MCF 10A (cell line): ENCODE measurements at regions of chr18 and their contacts with region 1.

Region 1: GRCh38 chr18:42053188-42053781 is 98.3 kb downstream of the PIK3C3 start:
- DNase-seq: peak; percentile 56
- H3K4me3 Mint-ChIP-seq: no peak overlapping the region
- H3K27ac Mint-ChIP-seq: peak overlapping the region; percentile 59
- H3K4me1 Mint-ChIP-seq: peaks cover 7% of the 10 kb centered on the region
- H3K27me3 Mint-ChIP-seq: no peaks in the 10 kb centered on the region
- CTCF ChIP-seq: peak; percentile 66

Region 2: GRCh38 chr18:42028247-42028832 is 24.9 kb before region 1 on chr18:
- CTCF ChIA-PET with region 1: interaction called, 13 read pairs
- POLR2A ChIA-PET with region 1: interaction called, 4 read pairs
- intact Hi-C with region 1: no loop called
- DNase-seq: peak; percentile 38
- H3K4me3 Mint-ChIP-seq: no peak overlapping the region
- H3K27ac Mint-ChIP-seq: no peak overlapping the region
- H3K4me1 Mint-ChIP-seq: no peaks in the 10 kb centered on the region
- H3K27me3 Mint-ChIP-seq: no peaks in the 10 kb centered on the region
- CTCF ChIP-seq: peak; percentile 38

Region 3: GRCh38 chr18:42064109-42064508 is 10.8 kb after region 1 on chr18:
- CTCF ChIA-PET with region 1: interaction called, 23 read pairs
- POLR2A ChIA-PET with region 1: interaction called, 3 read pairs
- intact Hi-C with region 1: no loop called
- DNase-seq: no peak
- H3K4me3 Mint-ChIP-seq: no peak overlapping the region
- H3K27ac Mint-ChIP-seq: peak overlapping the region; percentile 46
- H3K4me1 Mint-ChIP-seq: no peaks in the 10 kb centered on the region
- H3K27me3 Mint-ChIP-seq: no peaks in the 10 kb centered on the region
- CTCF ChIP-seq: no peak

Region 4: DNA sequence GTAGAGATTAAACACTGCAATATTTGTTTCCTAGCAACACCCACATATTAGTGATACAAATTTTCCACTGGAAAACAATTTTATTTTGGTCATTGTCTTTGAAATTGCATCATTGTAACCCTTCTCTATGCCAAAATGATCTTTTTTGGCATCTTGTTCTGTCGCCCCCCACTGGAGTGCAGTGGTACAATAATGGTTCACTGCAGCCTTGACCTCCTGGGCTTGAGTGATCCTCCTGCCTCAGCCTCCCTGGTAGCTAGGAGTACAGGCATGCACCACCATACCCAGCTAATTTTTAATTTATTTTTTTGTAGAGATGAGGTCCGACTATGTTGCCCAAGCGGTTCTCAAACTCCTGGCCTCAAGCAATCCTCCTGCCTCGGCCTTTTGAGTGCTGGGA is 19.1 kb after region 1 on chr18:
- CTCF ChIA-PET with region 1: interaction called, 23 read pairs
- POLR2A ChIA-PET with region 1: interaction called, 3 read pairs
- intact Hi-C with region 1: no loop called
- DNase-seq: no peak
- H3K4me3 Mint-ChIP-seq: no peak overlapping the region
- H3K27ac Mint-ChIP-seq: no peak overlapping the region
- H3K4me1 Mint-ChIP-seq: no peaks in the 10 kb centered on the region
- H3K27me3 Mint-ChIP-seq: no peaks in the 10 kb centered on the region
- CTCF ChIP-seq: no peak

Region 5: DNA sequence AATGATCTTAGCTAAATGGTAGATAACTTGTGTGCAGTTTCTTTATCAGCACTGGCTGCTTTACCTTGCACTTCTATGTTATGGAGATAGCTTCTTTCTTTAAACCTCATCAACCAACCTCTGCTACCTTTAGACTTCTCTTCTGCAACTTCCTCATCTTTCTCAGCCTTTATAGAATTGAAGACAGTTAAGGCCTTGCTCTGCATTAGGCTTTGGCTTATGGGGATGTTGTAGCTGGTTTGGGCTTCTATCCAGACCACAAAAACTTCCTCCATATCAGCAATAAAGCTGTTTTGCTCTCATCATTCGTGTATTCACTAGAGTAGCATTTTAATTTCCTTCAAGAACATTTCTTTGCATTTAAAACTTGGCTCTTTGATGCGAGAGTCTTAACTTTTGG is 25.4 kb after region 1 on chr18:
- CTCF ChIA-PET with region 1: interaction called, 16 read pairs
- POLR2A ChIA-PET with region 1: interaction called, 3 read pairs
- intact Hi-C with region 1: no loop called
- DNase-seq: no peak
- H3K4me3 Mint-ChIP-seq: no peak overlapping the region
- H3K27ac Mint-ChIP-seq: no peak overlapping the region
- H3K4me1 Mint-ChIP-seq: no peaks in the 10 kb centered on the region
- H3K27me3 Mint-ChIP-seq: no peaks in the 10 kb centered on the region
- CTCF ChIP-seq: no peak

Region 6: GRCh38 chr18:42222557-42222956 is 169.3 kb after region 1 on chr18:
- CTCF ChIA-PET with region 1: no interaction called
- POLR2A ChIA-PET with region 1: no interaction called
- intact Hi-C with region 1: no loop called
- DNase-seq: no peak
- H3K4me3 Mint-ChIP-seq: no peak overlapping the region
- H3K27ac Mint-ChIP-seq: no peak overlapping the region
- H3K4me1 Mint-ChIP-seq: no peaks in the 10 kb centered on the region
- H3K27me3 Mint-ChIP-seq: no peaks in the 10 kb centered on the region
- CTCF ChIP-seq: no peak

Region 7: GRCh38 chr18:42298759-42299675 is 245.7 kb after region 1 on chr18:
- CTCF ChIA-PET with region 1: interaction called, 4 read pairs
- POLR2A ChIA-PET with region 1: no interaction called
- intact Hi-C with region 1: loop called (anchors 5 kb)
- DNase-seq: peak; percentile 75
- H3K4me3 Mint-ChIP-seq: no peak overlapping the region
- H3K27ac Mint-ChIP-seq: no peak overlapping the region
- H3K4me1 Mint-ChIP-seq: no peaks in the 10 kb centered on the region
- H3K27me3 Mint-ChIP-seq: peaks cover 12% of the 10 kb centered on the region
- CTCF ChIP-seq: peak; percentile 81

Region 8: DNA sequence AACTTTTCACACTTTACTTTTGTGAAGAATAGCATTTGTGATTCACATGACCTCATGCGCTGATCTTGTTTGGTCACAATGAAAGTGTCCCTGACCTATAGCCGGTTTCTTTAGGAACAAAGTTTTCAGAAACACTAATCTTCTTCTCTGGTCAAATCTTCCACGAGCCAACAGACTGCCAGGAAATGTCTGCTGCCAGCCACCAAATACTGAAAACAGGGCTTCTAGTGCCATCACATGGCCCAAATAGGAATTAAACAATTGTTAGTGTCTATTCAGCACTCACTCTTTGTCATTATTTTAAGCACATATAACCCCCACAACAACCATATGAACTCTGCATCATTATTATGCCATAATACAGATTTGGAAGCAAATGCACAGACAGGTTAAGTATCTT is 1510.5 kb after region 1 on chr18:
- CTCF ChIA-PET with region 1: interaction called, 3 read pairs
- POLR2A ChIA-PET with region 1: no interaction called
- intact Hi-C with region 1: loop called (anchors 2 kb)
- DNase-seq: peak; percentile 56
- H3K4me3 Mint-ChIP-seq: no peak overlapping the region
- H3K27ac Mint-ChIP-seq: no peak overlapping the region
- H3K4me1 Mint-ChIP-seq: no peaks in the 10 kb centered on the region
- H3K27me3 Mint-ChIP-seq: peaks cover 69% of the 10 kb centered on the region
- CTCF ChIP-seq: peak; percentile 65